ENCODE measurements at regions of chr19 and their contacts with region 1.

Region 1: GRCh38 chr19:3365836-3366752 is at the start of gene NFIC:
- DNase-seq: peak; percentile 83
- H3K4me3 ChIP-seq: peak within 1 kb of the TSS; percentile 87 to 96
- H3K27ac ChIP-seq: peak within 1 kb of the TSS; percentile 97 to 99
- H3K4me1 ChIP-seq: peaks cover 52% of the 10 kb centered on the region
- H3K27me3 ChIP-seq: no peaks in the 10 kb centered on the region
- CTCF ChIP-seq: no peak
- POLR2A ChIP-seq: no peak
- total RNA-seq, gene NFIC: 113 to 127 TPM

Region 2: GRCh38 chr19:3429581-3430080 is 63.5 kb after region 1 on chr19:
- intact Hi-C with region 1: loop called (anchors 10 kb)
- DNase-seq: peak; percentile 90
- H3K4me3 ChIP-seq: no peak overlapping the region
- H3K27ac ChIP-seq: peak overlapping the region in 1 of 2 donors; percentile 90
- H3K4me1 ChIP-seq: peaks cover 33% of the 10 kb centered on the region
- H3K27me3 ChIP-seq: no peaks in the 10 kb centered on the region
- CTCF ChIP-seq: peak; percentile 97 to 98 (median 98)
- POLR2A ChIP-seq: no peak